ENCODE measurements at regions of chr11 and their contacts with region 1.

Region 1: DNA sequence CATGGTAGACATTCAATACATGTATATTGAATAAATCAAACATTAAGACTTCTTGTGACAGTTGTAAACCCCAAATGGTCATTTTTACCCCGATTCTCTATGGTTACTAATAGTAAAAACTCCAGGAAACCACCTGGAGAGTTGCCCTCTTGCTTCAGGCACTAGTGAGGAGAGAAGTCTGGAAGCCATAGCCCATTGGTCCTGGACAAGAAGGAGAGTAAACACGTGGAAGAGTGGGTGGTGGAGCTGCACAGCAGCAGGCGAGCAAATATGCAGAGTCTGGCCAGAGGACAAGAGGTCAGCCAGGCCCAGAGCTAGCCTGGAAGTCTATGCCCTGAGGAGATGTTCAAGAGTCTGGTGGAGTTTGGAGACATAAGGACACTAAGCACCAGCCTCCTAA is 17.7 kb downstream of the DCHS1 start:
- DNase-seq: peak in 1 of 42 donors; percentile 23

Region 2: GRCh38 chr11:6531267-6531752 is 106.6 kb before region 1 on chr11:
- intact Hi-C with region 1: no loop called
- DNase-seq: peak in 18 of 42 donors; percentile 14 to 76 (median 41)

Region 3: DNA sequence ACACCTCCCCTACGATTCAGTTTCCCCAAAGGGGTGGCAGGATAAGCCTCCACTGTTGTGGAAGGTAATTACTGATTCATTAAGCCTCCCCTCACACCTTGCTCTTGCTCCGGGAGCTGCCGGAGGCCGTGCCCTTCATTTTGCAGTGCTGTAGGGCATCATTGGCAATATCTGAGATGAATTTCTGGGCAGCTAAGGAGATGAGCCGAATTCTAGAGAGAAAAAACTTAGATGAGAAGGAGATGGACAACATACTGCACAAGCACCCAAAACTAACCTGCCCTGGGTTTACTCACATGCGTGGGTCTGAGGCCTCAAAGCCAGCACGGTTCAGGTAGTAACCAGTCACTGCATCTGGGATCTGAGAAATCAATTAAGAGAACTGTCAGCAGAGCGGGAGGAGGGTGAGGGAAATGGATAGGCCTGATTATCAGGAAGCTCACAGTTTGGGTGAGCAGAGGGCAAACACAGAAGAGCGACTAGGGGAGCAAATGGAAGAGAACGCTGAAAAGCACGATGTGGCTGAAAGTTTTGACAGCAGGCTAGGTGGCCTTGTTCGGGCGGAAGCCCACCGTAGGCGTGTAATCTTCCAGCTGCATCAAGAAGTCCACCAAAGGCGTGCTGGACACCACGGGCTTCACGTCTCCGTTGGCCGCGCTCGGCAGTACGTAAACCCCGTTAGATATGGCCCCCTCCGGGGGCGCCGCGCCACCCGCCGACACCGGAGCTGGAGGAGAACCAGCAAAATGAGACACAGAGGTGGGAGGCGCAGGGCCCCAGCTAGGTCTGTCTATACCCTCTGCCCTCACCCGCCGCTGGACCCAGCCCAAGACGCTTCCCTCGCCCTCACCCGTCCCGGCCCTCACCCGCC is 26.5 kb before region 1 on chr11:
- intact Hi-C with region 1: loop called (anchors 1 kb)
- DNase-seq: peak in 29 of 42 donors; percentile 26 to 71 (median 46)

Measured in head of caudate nucleus (tissue), 42 donors.